ENCODE measurements at regions of chr12 and their contacts with region 1.

Region 1: GRCh38 chr12:110100315-110100970 is 23.7 kb upstream of the IFT81 start:
- DNase-seq: no peak
- ATAC-seq: peak; percentile 91
- H3K4me3 ChIP-seq: no peak overlapping the region
- H3K27ac ChIP-seq: no peak overlapping the region
- H3K4me1 ChIP-seq: peaks cover 11% of the 10 kb centered on the region
- H3K27me3 ChIP-seq: no peaks in the 10 kb centered on the region
- CTCF ChIP-seq: peak; percentile 91

Region 2: GRCh38 chr12:109870648-109871047 is 229.8 kb before region 1 on chr12:
- intact Hi-C with region 1: no loop called
- DNase-seq: no peak
- ATAC-seq: no peak
- H3K4me3 ChIP-seq: no peak overlapping the region
- H3K27ac ChIP-seq: no peak overlapping the region
- H3K4me1 ChIP-seq: peaks cover 15% of the 10 kb centered on the region
- H3K27me3 ChIP-seq: no peaks in the 10 kb centered on the region
- CTCF ChIP-seq: no peak

Region 3: DNA sequence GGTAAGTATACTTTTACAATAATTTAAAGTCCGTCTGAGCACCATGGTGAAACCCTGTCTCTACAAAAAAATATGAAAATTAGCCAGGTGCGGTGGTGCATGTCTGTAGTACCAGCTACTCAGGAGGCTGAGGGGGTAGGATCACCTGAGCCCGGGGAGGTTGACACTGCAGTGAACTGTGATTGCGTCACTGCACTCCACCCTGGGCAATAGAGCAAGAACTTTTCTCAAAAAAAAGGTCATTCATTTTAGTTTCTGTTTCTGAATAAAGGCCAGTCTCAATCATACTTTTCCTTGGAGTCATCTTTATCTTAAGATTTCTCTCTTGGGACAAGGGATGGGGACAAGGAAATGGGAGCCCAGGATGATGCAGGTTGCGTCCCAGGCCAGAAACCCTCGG is 88.3 kb before region 1 on chr12:
- intact Hi-C with region 1: no loop called
- DNase-seq: peak; percentile 77
- ATAC-seq: peak; percentile 71
- H3K4me3 ChIP-seq: no peak overlapping the region
- H3K27ac ChIP-seq: no peak overlapping the region
- H3K4me1 ChIP-seq: peaks cover 26% of the 10 kb centered on the region
- H3K27me3 ChIP-seq: no peaks in the 10 kb centered on the region
- CTCF ChIP-seq: no peak

Region 4: DNA sequence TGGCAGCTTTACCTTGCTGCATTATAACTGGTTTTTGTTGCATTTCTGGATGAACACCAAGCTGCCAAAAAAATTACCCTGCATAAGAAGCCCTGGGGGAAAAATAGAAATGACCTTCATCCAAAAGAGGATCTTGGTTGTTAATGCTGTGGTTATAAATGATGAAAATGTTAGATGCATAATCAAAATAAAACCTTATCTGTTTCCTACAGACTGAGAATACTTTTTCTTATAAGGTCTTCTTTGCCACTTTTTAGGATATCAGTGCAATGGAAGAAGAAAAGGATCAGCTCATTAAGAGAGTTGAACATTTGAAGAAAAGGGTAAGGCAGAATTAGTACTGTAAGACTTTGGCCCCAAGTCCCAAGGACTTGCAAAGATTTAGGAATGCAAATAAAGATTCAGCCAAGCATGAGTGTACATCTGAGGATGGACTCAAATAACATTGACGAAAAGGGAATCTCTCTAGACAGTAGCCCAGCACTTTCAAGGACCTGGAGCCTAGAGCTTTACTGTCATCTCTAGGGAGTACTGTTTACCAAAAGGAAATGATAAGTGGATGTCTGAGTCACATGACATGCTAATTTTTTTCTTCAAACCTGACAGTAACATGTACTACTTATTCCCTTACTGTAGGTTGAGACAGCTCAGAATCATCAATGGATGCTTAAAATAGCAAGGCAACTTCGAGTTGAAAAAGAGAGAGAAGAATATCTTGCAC is 34.4 kb after region 1 on chr12:
- intact Hi-C with region 1: no loop called
- DNase-seq: no peak
- ATAC-seq: no peak
- H3K4me3 ChIP-seq: no peak overlapping the region
- H3K27ac ChIP-seq: no peak overlapping the region
- H3K4me1 ChIP-seq: no peaks in the 10 kb centered on the region
- H3K27me3 ChIP-seq: no peaks in the 10 kb centered on the region
- CTCF ChIP-seq: no peak

Region 5: DNA sequence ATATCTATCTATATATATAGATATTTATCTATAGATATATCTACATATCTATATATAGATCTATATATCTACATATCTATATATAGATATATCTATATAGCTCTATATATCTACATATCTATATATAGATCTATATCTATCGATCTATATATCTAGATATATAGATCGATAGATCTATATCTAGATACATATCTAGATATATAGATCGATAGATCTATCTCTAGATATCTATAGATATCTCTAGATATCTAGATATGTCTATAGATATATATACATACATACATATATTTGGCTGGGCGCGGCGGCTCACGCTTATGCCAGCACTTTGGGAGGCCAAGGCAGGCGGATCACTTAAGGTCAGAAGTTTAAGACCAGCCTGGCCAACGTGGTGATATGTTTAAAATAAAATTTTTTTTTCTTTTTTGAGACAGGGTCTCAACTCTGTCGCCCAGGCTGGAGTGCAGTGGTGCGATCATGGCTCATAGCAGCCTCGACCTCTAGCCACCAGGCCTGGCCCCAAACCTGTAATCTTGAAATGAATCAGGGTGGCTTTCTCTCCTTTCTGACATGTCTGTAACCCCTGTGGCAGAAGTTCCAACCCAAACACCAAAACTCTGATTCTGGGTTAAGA is 331.6 kb after region 1 on chr12:
- intact Hi-C with region 1: loop called (anchors 5 kb)
- DNase-seq: peak; percentile 55
- ATAC-seq: no peak
- H3K4me3 ChIP-seq: peak overlapping the region; percentile 56
- H3K27ac ChIP-seq: peak overlapping the region; percentile 70
- H3K4me1 ChIP-seq: peaks cover 3% of the 10 kb centered on the region
- H3K27me3 ChIP-seq: no peaks in the 10 kb centered on the region
- CTCF ChIP-seq: no peak